HepG2 (cell line): ENCODE measurements at regions of chr4 and their contacts with region 1.

Region 1: GRCh38 chr4:99159699-99160098 is 15.6 kb upstream of the ADH4 start:
- DNase-seq: peak; percentile 20
- ATAC-seq: no peak
- H3K4me3 ChIP-seq: no peak overlapping the region
- H3K27ac ChIP-seq: no peak overlapping the region
- H3K4me1 ChIP-seq: peaks cover 70% of the 10 kb centered on the region
- H3K27me3 ChIP-seq: no peaks in the 10 kb centered on the region
- CTCF ChIP-seq: peak; percentile 56
- EP300 ChIP-seq: no peak
- POLR2A ChIP-seq: no peak
- RAD21 ChIP-seq: peak; percentile 46; the same call in 1 of the 2 replicates

Region 2: GRCh38 chr4:98612318-98613250 is 547.1 kb before region 1 on chr4:
- CTCF ChIA-PET with region 1: no interaction called
- POLR2A ChIA-PET with region 1: no interaction called
- in situ Hi-C with region 1: no loop called
- intact Hi-C with region 1: no loop called
- DNase-seq: no peak
- ATAC-seq: no peak
- H3K4me3 ChIP-seq: no peak overlapping the region
- H3K27ac ChIP-seq: no peak overlapping the region
- H3K4me1 ChIP-seq: no peaks in the 10 kb centered on the region
- H3K27me3 ChIP-seq: peaks cover 0 to 9% of the 10 kb centered on the region in 2 experiments; a peak in 2 of 5 replicates
- CTCF ChIP-seq: no peak
- EP300 ChIP-seq: no peak
- POLR2A ChIP-seq: no peak
- RAD21 ChIP-seq: no peak

Region 3: GRCh38 chr4:98928505-98929340 is 231.0 kb before region 1 on chr4 and contains the start of gene EIF4E:
- CTCF ChIA-PET with region 1: no interaction called
- POLR2A ChIA-PET with region 1: no interaction called
- in situ Hi-C with region 1: no loop called
- intact Hi-C with region 1: loop called (anchors 2 kb)
- DNase-seq: peak; percentile 98
- ATAC-seq: peak; percentile 78
- H3K4me3 ChIP-seq: peak within 1 kb of the TSS; percentile 82 to 99 (median 93)
- H3K27ac ChIP-seq: peak within 1 kb of the TSS; percentile 95
- H3K4me1 ChIP-seq: peaks cover 30% of the 10 kb centered on the region
- H3K27me3 ChIP-seq: no peaks in the 10 kb centered on the region; a peak in 1 of 5 replicates
- CTCF ChIP-seq: peak; percentile 42
- EP300 ChIP-seq: 0 out of 4 replicates have a peak, but pooled peaks of 1 of the 2 experiments have one; percentile 39
- POLR2A ChIP-seq: peak; percentile 49 to 67; a peak in 3 of 4 replicates
- RAD21 ChIP-seq: no peak; the same call in 1 of the 2 replicates
- total RNA-seq, gene EIF4E: 194 and 288 TPM in 2 replicates

Region 4: GRCh38 chr4:99144070-99144469 is 15.6 kb before region 1 on chr4 and contains the start of gene ADH4:
- CTCF ChIA-PET with region 1: no interaction called
- POLR2A ChIA-PET with region 1: interaction called, 58 read pairs
- in situ Hi-C with region 1: no loop called
- intact Hi-C with region 1: no loop called
- DNase-seq: peak; percentile 83
- ATAC-seq: peak; percentile 93
- H3K4me3 ChIP-seq: peak within 1 kb of the TSS; percentile 45 to 64 (median 54); a peak in 5 of 6 replicates
- H3K27ac ChIP-seq: peak within 1 kb of the TSS; percentile 96
- H3K4me1 ChIP-seq: peaks cover 59% of the 10 kb centered on the region
- H3K27me3 ChIP-seq: no peaks in the 10 kb centered on the region
- CTCF ChIP-seq: no peak
- EP300 ChIP-seq: peak; percentile 40 to 84; a peak in 2 of 4 replicates
- POLR2A ChIP-seq: peak; percentile 51 to 71; a peak in 3 of 4 replicates
- RAD21 ChIP-seq: no peak
- total RNA-seq, gene ADH4: 31.1 and 50.3 TPM in 2 replicates

Region 5: DNA sequence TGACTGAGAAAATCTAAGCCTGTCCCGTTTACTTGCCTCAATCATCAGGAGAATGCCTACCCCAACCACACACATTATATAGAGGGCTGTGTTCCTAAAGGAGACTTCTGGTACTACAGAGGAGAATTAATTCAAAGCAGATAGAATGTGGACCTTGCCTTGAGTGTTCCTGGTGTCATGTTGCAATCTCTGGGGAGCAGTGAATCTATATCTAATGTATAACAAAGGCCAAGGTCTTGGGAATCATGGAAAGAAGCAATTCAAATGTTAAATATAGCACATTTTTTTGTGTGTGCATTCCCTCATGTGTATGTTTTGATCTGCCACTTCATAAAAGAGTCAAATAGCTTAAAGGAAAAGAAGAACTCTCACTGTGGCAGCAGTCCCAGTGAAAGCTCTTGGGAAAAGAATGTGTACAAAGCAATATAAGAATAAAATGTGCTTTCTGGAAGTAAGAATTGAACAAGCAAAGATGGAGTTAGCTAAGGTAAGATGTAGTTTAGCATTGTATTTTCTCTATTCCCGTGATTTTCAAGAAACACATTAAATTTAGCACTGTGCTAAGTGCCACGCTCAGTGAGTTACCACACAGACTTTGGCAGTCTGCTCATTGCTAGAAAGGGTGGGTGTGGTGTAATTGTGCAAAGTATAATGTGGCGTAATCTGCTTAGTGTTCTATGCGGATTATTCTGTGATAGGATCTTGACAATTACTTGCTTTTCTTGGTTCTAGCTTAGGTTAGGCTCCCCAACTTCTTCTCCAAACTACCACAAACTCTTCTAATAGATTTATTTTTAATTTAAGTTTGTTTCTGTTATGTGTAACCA is 45.7 kb after region 1 on chr4:
- CTCF ChIA-PET with region 1: no interaction called
- POLR2A ChIA-PET with region 1: interaction called, 3 read pairs
- in situ Hi-C with region 1: no loop called
- intact Hi-C with region 1: loop called (anchors 1 kb)
- DNase-seq: peak; percentile 83
- ATAC-seq: peak; percentile 92
- H3K4me3 ChIP-seq: no peak overlapping the region
- H3K27ac ChIP-seq: peak overlapping the region; percentile 66
- H3K4me1 ChIP-seq: peaks cover 59% of the 10 kb centered on the region
- H3K27me3 ChIP-seq: no peaks in the 10 kb centered on the region
- CTCF ChIP-seq: no peak
- EP300 ChIP-seq: peak in 1 of 2 experiments; percentile 50; a peak in 1 of 4 replicates
- POLR2A ChIP-seq: no peak
- RAD21 ChIP-seq: no peak

Region 6: GRCh38 chr4:99219479-99219878 is 59.8 kb after region 1 on chr4:
- CTCF ChIA-PET with region 1: no interaction called
- POLR2A ChIA-PET with region 1: interaction called, 12 read pairs
- in situ Hi-C with region 1: no loop called
- intact Hi-C with region 1: loop called (anchors 2 kb)
- DNase-seq: peak; percentile 23
- ATAC-seq: peak; percentile 55
- H3K4me3 ChIP-seq: peak overlapping the region; percentile 26 to 81 (median 71); a peak in 5 of 6 replicates
- H3K27ac ChIP-seq: peak overlapping the region; percentile 69
- H3K4me1 ChIP-seq: peaks cover 41% of the 10 kb centered on the region
- H3K27me3 ChIP-seq: no peaks in the 10 kb centered on the region; a peak in 1 of 5 replicates
- CTCF ChIP-seq: no peak
- EP300 ChIP-seq: no peak
- POLR2A ChIP-seq: no peak
- RAD21 ChIP-seq: no peak